Dendritic cell treated with granulocyte-macrophage colony-stimulating factor and Interleukin-4, amounts not matched to agents 40 ng/mL and 50 ng/mL, for 4 days (primary cell): ENCODE measurements at regions of chr14 and their contacts with region 1.

Region 1: GRCh38 chr14:23286020-23286905 is at the start of gene HOMEZ:
- H3K4me3 Mint-ChIP-seq: peak within 1 kb of the TSS; percentile 98
- H3K27ac Mint-ChIP-seq: peak within 1 kb of the TSS; percentile 100
- H3K4me1 Mint-ChIP-seq: peaks cover 33% of the 10 kb centered on the region
- H3K27me3 Mint-ChIP-seq: no peaks in the 10 kb centered on the region

Region 2: GRCh38 chr14:23006544-23007419 is 279.5 kb before region 1 on chr14:
- intact Hi-C with region 1: loop called (anchors 5 kb)
- H3K4me3 Mint-ChIP-seq: peak overlapping the region; percentile 96
- H3K27ac Mint-ChIP-seq: peak overlapping the region; percentile 99
- H3K4me1 Mint-ChIP-seq: peaks cover 14% of the 10 kb centered on the region
- H3K27me3 Mint-ChIP-seq: no peaks in the 10 kb centered on the region

Region 3: GRCh38 chr14:23301288-23301968 is 15.2 kb after region 1 on chr14:
- intact Hi-C with region 1: loop called (anchors 2 kb)
- H3K4me3 Mint-ChIP-seq: peak overlapping the region; percentile 92
- H3K27ac Mint-ChIP-seq: peak overlapping the region; percentile 98
- H3K4me1 Mint-ChIP-seq: peaks cover 52% of the 10 kb centered on the region
- H3K27me3 Mint-ChIP-seq: no peaks in the 10 kb centered on the region